Right cardiac atrium (tissue), 5 donors: ENCODE measurements at regions of chr10 and their contacts with region 1.

Region 1: DNA sequence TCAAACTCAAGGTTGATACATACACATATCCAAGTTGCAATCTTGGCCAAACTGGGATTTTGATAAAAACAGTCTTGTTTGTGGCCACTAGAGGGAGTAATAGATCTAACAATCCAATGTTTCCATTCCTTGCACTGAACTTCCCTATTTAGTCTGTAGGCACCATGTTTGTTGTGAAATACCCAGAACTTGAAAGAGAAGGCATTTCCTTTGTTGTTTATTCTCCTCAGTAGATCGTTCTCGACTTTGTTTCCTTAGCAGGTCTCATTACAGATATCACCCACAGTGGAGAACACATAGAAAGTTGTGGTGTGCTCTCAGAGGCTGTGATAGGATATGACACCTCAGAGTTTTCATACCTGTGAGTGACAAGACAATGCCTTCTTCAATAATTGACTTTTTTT is 70.3 kb upstream of the MXI1 start:
- DNase-seq: no peak
- ATAC-seq: peak; percentile 79 to 80
- H3K4me3 ChIP-seq: no peak overlapping the region
- H3K27ac ChIP-seq: no peak overlapping the region
- H3K4me1 ChIP-seq: peaks cover 7% of the 10 kb centered on the region
- H3K27me3 ChIP-seq: no peaks in the 10 kb centered on the region

Region 2: GRCh38 chr10:109883859-109884771 is 253.0 kb before region 1 on chr10:
- intact Hi-C with region 1: loop called in 1 of 4 experiments (anchors 10 kb)
- DNase-seq: peak; percentile 76 to 91 (median 85)
- ATAC-seq: peak; percentile 89 to 90
- H3K4me3 ChIP-seq: no peak overlapping the region
- H3K27ac ChIP-seq: peak overlapping the region; percentile 18
- H3K4me1 ChIP-seq: peaks cover 11% of the 10 kb centered on the region
- H3K27me3 ChIP-seq: no peaks in the 10 kb centered on the region

Region 3: GRCh38 chr10:109996225-109996624 is 140.9 kb before region 1 on chr10:
- intact Hi-C with region 1: loop called in 1 of 4 experiments (anchors 10 kb)
- DNase-seq: no peak
- ATAC-seq: peak in 1 of 2 donors; percentile 64
- H3K4me3 ChIP-seq: no peak overlapping the region
- H3K27ac ChIP-seq: no peak overlapping the region
- H3K4me1 ChIP-seq: no peaks in the 10 kb centered on the region
- H3K27me3 ChIP-seq: no peaks in the 10 kb centered on the region

Region 4: DNA sequence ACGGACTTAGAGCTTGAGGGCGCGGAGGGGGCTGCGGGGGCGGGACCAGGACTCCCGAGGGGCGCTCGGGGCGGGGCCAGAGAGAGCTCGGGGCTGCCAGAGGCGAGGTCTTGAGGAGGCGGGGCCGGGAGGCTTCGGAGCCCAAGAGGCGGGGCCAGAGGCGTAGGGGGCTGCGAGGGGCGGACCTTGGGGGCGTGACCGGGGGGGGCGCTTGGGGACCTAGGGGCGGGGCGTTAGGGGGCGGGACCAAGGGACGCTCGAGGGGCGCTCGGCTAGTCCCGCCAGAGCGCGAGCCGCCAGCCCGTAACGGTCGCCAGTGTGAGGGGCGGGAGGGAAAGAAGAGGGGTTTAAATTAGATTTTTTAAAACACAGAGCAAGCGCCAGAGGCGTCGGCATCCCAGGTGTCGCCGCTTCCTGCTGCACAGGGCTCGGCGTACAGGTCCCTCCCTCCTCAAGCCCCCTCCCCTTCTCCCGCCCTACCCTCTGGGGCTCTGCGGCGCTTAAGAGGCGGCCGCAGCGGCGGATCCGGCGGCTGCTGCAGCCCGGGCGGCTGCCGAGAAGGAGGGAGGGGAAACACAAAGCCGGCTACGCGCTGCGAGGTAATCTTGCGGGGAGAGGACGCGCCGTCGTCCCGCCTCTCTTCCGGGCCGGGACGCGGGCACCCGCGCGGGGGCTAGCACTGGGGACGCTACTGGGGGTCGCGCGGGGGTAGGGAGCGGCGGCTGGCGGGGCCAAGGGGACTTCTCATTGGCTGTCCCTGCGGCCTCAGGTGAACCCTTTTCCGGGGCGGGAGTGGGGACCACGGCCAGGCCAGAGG is 129.2 kb before region 1 on chr10 and contains the start of gene ADD3:
- intact Hi-C with region 1: no loop called
- DNase-seq: peak; percentile 97 to 99 (median 99)
- ATAC-seq: peak; percentile 95
- H3K4me3 ChIP-seq: peak within 1 kb of the TSS; percentile 98
- H3K27ac ChIP-seq: peak within 1 kb of the TSS; percentile 92
- H3K4me1 ChIP-seq: peaks cover 2% of the 10 kb centered on the region
- H3K27me3 ChIP-seq: no peaks in the 10 kb centered on the region
- total RNA-seq, gene ADD3: 113 to 146 (median 124) TPM

Region 5: DNA sequence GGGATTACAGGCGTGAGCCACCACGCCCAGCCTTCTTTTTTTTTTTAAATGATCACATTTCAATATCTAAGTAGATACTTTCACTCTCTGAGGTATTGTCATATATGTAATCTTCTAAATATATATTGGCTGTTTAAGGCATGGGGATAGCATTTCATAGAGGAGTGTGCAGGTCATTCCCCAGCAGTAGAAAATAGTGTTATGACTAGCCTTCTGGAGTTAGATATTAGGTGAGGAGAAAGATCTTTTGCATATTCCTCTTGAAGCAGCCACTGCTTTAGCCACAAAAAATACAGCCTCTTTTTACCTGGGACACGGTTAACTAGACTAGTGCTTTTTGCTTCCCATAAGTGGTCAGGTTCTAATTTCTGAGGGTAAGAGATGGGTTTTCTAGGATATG is 100.5 kb before region 1 on chr10:
- intact Hi-C with region 1: loop called in 1 of 4 experiments (anchors 10 kb)
- DNase-seq: no peak
- ATAC-seq: no peak
- H3K4me3 ChIP-seq: no peak overlapping the region
- H3K27ac ChIP-seq: no peak overlapping the region
- H3K4me1 ChIP-seq: peaks cover 13% of the 10 kb centered on the region
- H3K27me3 ChIP-seq: no peaks in the 10 kb centered on the region

Region 6: DNA sequence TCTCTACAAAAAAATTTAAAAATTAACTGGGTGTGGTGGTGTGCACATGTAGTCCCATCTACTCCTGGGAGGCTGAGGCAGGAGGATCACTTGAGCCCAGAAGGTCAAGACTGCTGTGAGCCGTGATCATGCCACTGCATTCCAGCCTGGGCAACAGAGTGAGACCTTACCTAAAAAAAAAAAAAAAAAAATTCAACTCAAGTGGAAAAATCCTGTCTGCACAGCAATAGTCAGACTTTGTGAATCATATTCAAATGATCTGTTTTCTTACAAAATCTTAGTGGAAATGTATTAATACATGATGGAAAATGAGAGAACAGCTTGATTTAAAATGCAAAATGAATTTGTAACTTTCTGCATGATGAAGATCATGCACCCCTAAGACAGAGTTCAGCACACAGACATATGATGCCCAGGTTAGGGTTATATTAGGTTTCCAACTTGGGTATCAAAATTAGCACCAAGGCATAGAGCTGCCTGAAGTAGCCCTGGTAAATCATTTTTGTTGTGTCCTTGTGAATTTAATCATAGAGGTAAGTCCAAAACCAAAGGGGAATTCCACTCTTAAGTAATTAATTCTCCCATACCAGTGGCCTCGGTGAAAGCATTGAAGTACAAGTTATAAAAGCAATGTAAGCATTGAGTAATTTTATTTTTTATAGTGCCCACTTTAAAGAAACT is 35.5 kb before region 1 on chr10:
- intact Hi-C with region 1: no loop called
- DNase-seq: no peak
- ATAC-seq: no peak
- H3K4me3 ChIP-seq: no peak overlapping the region
- H3K27ac ChIP-seq: no peak overlapping the region
- H3K4me1 ChIP-seq: peaks cover 4% of the 10 kb centered on the region
- H3K27me3 ChIP-seq: no peaks in the 10 kb centered on the region

Region 7: GRCh38 chr10:110206995-110207804 is 70.1 kb after region 1 on chr10 and contains the start of gene MXI1:
- intact Hi-C with region 1: loop called in 2 of 4 experiments (anchors 5 to 10 kb)
- DNase-seq: peak; percentile 80 to 92 (median 86)
- ATAC-seq: peak; percentile 48 to 65
- H3K4me3 ChIP-seq: peak within 1 kb of the TSS; percentile 89
- H3K27ac ChIP-seq: peak within 1 kb of the TSS; percentile 95
- H3K4me1 ChIP-seq: peaks cover 4% of the 10 kb centered on the region
- H3K27me3 ChIP-seq: no peaks in the 10 kb centered on the region
- total RNA-seq, gene MXI1: 57.5 to 91.3 (median 62.4) TPM

Region 8: DNA sequence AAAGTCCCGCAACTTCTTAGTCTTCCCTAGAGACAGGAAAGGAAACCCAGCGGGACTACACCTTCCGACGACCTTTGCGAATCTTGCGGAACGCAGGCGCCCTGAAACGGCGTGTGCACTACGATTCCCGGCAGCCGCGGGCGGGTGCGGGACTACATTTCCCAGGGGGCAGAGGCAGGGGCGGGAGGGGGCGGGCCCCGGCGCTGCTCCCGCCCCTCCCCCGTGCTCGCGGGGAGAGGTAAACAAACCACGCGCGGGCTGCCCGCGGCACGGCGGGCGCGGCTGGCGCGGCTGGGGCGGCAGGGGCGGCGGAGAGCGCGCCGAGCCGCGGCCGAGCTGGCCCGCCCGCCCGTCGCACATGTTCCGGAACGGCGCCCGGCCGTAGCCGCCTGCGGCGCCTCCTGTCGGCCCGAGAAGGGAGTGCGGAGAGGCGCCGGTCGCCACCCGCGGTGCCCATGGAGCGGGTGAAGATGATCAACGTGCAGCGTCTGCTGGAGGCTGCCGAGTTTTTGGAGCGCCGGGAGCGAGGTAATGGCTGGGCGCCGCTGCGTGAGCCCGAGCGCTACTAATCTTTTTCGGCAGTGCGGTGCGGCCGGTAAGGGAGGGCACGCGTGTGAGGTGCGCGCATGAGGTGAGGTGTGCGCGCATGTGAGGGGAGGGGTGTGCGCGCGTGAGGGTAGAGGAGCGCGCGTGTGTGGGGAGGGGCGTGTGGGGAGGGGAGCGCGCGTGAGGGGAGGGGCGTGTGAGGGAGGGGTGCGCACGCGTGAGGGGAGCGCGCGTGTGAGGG is 88.8 kb after region 1 on chr10:
- intact Hi-C with region 1: loop called in 3 of 4 experiments (anchors 5 kb)
- DNase-seq: peak; percentile 92 to 97 (median 96)
- ATAC-seq: peak; percentile 74 to 75
- H3K4me3 ChIP-seq: peak overlapping the region; percentile 70
- H3K27ac ChIP-seq: peak overlapping the region; percentile 95
- H3K4me1 ChIP-seq: peaks cover 5% of the 10 kb centered on the region
- H3K27me3 ChIP-seq: no peaks in the 10 kb centered on the region

Region 9: DNA sequence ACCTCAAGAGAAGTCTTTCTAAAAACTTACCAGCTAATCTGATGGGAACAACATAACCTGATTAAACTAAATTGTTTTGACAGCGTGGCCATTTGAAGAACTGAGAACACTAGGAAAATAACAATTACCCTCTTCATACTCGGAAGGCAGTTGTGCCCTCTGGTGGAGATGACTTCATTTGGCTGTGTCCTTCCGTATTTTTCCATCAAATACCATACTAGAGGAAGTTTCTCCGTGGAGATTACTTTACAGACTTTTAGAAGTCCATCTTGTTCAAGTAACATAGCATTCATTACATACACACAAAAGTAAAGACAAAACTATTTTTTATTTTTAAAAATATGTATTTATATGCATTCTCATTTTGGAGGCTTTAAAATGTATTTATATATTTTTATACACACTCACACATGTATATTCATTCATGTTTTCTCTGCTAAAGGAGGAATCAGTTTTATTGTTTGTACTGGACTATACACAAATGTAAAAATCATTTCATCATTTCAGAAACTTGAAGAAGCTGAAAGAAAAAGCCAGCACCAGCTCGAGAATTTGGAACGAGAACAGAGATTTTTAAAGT is 142.4 kb after region 1 on chr10:
- intact Hi-C with region 1: loop called (anchors 2 to 5 kb)
- DNase-seq: peak in 2 of 3 donors; percentile 26 to 29
- ATAC-seq: peak; percentile 86 to 87
- H3K4me3 ChIP-seq: no peak overlapping the region
- H3K27ac ChIP-seq: no peak overlapping the region
- H3K4me1 ChIP-seq: peaks cover 1% of the 10 kb centered on the region
- H3K27me3 ChIP-seq: no peaks in the 10 kb centered on the region